ENCODE measurements at regions of chr12 and their contacts with region 1.

Region 1: DNA sequence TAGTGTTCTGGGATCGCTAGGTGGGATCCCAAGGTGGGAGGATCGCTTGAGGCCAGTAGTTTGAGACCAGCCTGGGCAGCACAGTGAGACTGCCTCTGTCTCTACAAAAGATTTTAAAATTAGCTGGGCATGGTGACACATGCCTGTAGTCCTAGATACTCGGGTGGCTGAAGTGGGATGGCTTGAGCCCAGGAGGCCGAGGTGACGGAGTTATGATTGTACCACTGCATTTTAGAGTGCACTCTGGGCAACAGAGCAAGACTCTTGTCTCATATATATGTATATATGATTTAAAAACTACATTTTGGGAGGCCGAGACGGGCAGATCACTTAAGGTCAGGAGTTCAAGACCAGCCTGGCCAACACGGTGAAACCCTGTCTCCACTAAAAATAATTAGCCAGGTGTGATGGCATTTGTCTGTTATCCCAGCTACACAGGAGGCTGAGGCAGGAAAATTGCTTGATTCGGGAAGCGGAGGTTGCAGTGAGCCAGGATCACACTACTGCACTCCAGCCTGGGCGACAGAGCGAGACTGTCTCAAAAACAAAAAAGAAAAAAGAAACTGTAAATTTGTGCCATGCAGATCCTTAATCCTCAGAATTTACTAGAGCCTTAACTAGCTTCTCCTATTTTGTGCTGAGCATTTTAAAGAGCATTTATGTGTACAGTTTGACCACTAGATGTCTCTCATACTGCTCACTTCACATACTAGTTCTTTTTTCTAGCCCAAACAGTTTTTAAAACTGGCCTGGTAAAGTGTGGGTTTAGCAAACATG is 114.8 kb downstream of the MON2 start:
- DNase-seq: peak; percentile 37

Region 2: GRCh38 chr12:62166510-62166909 is 415.0 kb before region 1 on chr12:
- CTCF ChIA-PET with region 1: no interaction called
- POLR2A ChIA-PET with region 1: no interaction called
- DNase-seq: no peak

Region 3: DNA sequence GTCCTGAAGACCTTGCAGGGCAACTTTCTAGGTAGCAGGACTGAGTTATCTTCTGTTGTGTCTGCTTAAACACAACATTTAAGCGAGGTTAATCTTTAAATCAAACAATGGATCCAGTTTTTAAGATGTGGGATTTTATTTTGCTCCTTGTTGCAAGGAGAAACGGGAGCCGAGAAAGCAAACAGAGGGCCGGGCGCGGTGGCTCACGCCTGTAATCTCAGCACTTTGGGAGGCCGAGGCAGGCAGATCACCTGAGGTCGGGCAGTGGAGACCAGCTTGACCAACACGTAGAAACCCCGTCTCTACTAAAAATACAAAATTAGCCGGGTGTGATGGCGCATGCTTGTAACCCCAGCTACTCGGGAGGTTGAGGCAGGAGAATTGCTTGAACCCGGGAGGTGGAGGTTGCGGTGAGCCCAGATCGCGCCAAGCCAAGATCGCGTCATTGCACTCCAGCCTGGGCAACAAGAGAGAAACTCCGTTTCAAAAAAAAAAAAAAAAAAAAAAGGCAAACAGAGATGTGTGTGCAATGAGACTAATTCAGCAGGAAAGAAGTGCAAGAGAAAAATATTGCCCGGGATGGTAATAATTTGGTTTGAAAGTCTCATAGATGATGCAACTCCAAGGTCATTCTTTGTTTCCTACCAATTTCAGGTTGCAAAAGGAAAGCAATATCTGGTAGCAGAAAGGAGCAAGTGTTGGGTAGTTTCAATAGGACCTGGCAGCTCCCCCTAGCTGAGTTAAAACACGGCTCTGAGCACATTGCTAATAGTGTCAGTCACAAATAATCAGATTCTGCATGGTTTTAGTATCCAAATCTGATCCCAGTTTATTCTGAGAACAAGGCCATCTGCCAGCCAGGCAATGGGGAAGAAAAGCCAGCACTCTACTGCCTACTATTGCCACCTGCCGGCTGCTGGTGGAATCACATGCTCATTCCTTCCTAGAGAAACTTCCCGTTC is 212.1 kb after region 1 on chr12:
- CTCF ChIA-PET with region 1: interaction called, 20 read pairs
- POLR2A ChIA-PET with region 1: no interaction called
- DNase-seq: peak; percentile 73

Measured in HEK293T (cell line).